CD8-positive, alpha-beta T cell (primary cell): ENCODE measurements at regions of chr3 and their contacts with region 1.

Region 1: DNA sequence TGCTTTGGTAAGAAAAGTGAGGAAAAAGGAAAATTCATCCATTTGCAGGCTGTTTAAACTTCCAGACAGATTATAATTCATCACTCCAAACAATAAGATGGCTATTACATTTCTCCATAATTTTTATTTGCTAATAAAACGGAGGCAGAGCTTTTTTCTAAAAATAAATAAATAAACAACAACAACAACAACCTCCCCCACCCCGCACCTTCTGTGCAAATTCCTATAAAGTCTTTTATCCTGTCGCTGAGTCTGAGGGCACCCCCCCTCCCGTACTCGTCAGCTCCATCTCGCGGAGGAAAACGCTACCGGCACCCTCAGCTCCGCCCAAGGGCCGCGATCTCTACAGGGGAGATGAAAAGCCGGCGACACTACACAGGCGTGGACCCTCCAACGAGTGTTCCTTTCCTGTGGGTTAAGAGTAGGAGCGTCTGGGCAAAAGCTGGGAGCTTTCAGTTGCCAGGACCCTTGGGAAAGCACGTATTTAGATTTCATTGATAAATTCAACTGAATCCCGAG is 1.0 kb upstream of the ATP1B3 start:
- DNase-seq: peak; percentile 67 to 92 (median 84)
- ATAC-seq: peak; percentile 67
- H3K4me3 ChIP-seq: peak overlapping the region; percentile 71 to 88
- H3K4me3 Mint-ChIP-seq: peak overlapping the region; percentile 88
- H3K27ac ChIP-seq: peak overlapping the region; percentile 76 to 99
- H3K27ac Mint-ChIP-seq: peak overlapping the region; percentile 90
- H3K4me1 ChIP-seq: peaks cover 17% of the 10 kb centered on the region
- H3K4me1 Mint-ChIP-seq: peaks cover 29% of the 10 kb centered on the region
- H3K27me3 ChIP-seq: no peaks in the 10 kb centered on the region
- H3K27me3 Mint-ChIP-seq: no peaks in the 10 kb centered on the region
- CTCF ChIP-seq: peak; percentile 82

Region 2: DNA sequence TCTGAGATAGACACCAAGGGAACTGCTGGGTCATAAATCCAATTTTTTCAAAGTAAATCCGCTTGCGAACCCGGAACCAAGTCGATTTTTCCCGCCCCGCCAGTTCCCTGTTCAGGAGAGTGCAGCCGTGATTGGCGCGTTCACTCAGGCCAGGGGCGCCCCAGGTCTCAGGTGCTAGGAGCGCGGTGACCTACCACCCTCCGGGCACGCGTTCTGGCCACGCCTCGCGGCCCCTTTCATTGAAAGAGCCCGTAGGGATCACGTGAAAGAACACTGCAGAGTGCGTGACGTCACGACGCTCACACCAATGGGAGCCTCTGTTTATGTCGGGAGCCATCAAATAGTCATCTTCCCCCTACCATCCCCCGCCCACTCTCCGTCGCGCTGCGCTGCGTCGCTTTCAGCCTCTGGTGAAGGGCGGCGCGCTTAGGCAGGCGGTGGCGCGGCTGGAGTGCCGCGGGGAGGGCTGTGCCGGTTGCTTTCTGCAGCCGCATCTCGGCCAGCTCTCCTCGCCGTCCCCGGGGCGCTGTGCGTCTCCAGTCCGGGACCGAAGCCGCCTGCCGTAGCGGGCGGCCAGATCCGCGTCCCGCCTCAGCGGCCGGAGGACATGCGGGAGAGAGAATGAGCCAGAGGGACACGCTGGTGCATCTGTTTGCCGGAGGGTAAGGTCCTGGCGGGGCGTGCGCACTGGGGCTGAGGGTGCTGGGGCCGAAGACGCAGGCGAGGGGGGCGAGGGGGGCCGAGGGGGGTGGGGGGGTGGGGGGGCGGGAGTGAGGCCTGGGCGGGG is 933.8 kb before region 1 on chr3 and contains the start of gene SLC25A36:
- CTCF ChIA-PET with region 1: no interaction called
- POLR2A ChIA-PET with region 1: no interaction called
- intact Hi-C with region 1: loop called in 1 of 2 experiments (anchors 5 kb)
- DNase-seq: peak; percentile 90 to 100 (median 96)
- ATAC-seq: peak; percentile 96
- H3K4me3 ChIP-seq: peak within 1 kb of the TSS; percentile 71 to 78
- H3K4me3 Mint-ChIP-seq: peak within 1 kb of the TSS; percentile 90
- H3K27ac ChIP-seq: peak within 1 kb of the TSS; percentile 85 to 88
- H3K27ac Mint-ChIP-seq: peak within 1 kb of the TSS; percentile 99
- H3K4me1 ChIP-seq: peaks cover 14% of the 10 kb centered on the region
- H3K4me1 Mint-ChIP-seq: peaks cover 36% of the 10 kb centered on the region
- H3K27me3 ChIP-seq: no peaks in the 10 kb centered on the region
- H3K27me3 Mint-ChIP-seq: no peaks in the 10 kb centered on the region
- CTCF ChIP-seq: no peak
- total RNA-seq, gene SLC25A36: 156 to 165 TPM

Region 3: DNA sequence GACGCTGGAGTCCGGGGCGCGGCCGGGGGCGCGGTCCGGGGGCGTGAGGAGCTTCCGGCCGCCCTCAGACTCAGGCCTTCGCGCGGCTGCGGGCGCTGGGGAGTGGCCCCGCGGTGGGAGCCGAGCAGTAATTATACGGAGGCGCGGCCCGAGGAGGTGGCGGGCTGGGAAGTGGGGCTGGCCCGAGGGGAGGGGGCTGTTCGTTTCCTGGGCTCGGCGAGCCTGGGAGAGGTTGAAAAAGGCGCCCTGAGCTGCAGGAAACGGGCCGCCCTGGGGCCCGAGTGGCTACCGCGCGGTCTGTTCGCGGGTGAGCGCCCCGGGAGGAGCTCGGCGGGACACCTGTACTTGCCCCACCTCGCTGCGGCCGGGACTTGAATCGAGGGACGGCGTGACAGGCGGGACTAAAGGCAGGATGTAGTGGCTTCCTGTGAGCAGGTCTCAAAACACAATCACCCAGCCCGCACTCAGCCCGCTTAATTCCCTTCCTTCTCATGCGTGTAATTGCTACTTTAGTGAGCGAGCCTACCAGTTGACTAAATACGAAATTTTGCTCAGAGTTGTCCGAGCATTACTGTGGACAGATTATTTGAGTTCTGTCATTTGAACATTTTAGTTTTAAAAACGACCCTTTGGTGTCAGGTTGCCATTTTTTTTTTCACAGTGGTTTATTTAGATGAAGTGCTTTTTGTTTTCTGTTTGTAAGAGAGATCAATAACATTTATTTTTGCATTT is 387.7 kb before region 1 on chr3:
- CTCF ChIA-PET with region 1: no interaction called
- POLR2A ChIA-PET with region 1: interaction called, 5 read pairs
- intact Hi-C with region 1: loop called (anchors 5 kb)
- DNase-seq: peak; percentile 67 to 94 (median 87)
- ATAC-seq: peak; percentile 60
- H3K4me3 ChIP-seq: peak overlapping the region; percentile 59 to 68
- H3K4me3 Mint-ChIP-seq: peak overlapping the region; percentile 93
- H3K27ac ChIP-seq: peak overlapping the region; percentile 73 to 85
- H3K27ac Mint-ChIP-seq: peak overlapping the region; percentile 96
- H3K4me1 ChIP-seq: peaks cover 65% of the 10 kb centered on the region
- H3K4me1 Mint-ChIP-seq: peaks cover 76% of the 10 kb centered on the region
- H3K27me3 ChIP-seq: no peaks in the 10 kb centered on the region
- H3K27me3 Mint-ChIP-seq: no peaks in the 10 kb centered on the region
- CTCF ChIP-seq: no peak

Region 4: DNA sequence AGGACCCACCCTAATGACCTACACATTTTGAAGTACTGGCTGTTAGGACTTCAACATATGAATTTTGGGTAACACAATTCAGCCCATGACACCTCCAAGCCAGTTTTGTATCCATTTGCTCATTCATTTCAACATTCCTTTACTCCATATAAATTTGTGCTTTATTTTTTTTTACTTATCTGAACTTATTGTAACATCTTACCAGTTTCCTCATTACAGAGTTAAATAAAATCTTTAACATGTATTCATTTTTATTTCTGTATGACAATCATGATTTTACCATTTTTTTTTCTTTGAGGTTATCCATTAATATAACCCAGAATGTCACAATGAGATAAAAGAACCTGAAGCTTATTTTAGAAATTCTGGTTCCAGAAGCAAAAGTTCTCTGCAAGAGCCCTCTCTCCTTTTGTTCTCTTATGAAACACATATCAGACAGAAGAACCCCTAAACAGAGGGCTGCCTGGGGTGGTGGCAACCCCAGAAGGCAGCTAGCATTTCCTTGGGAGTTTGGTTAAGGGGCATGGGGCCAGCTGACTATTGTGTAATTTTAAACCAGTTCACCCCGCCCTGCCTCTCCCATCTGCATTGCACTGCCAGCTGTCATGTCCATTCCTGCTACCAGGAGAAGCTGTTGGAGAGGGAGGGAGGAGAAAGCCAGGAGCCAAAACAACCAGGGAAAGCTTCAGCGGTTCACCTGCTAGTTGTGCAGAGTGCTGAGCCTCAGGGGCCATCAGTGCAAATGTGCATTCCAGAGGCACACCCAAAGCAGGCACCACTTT is 46.8 kb before region 1 on chr3:
- CTCF ChIA-PET with region 1: no interaction called
- POLR2A ChIA-PET with region 1: no interaction called
- intact Hi-C with region 1: no loop called
- DNase-seq: no peak
- ATAC-seq: no peak
- H3K4me3 ChIP-seq: no peak overlapping the region
- H3K4me3 Mint-ChIP-seq: no peak overlapping the region
- H3K27ac ChIP-seq: no peak overlapping the region
- H3K27ac Mint-ChIP-seq: no peak overlapping the region
- H3K4me1 ChIP-seq: no peaks in the 10 kb centered on the region
- H3K4me1 Mint-ChIP-seq: no peaks in the 10 kb centered on the region
- H3K27me3 ChIP-seq: no peaks in the 10 kb centered on the region
- H3K27me3 Mint-ChIP-seq: no peaks in the 10 kb centered on the region
- CTCF ChIP-seq: no peak

Region 5: GRCh38 chr3:141845407-141846049 is 29.9 kb before region 1 on chr3:
- CTCF ChIA-PET with region 1: interaction called, 10 read pairs
- POLR2A ChIA-PET with region 1: interaction called, 3 read pairs
- intact Hi-C with region 1: no loop called
- DNase-seq: peak in 8 of 9 experiments; percentile 12 to 68 (median 50)
- ATAC-seq: peak; percentile 81
- H3K4me3 ChIP-seq: no peak overlapping the region
- H3K4me3 Mint-ChIP-seq: no peak overlapping the region
- H3K27ac ChIP-seq: no peak overlapping the region
- H3K27ac Mint-ChIP-seq: peak overlapping the region; percentile 22
- H3K4me1 ChIP-seq: peaks cover 6% of the 10 kb centered on the region
- H3K4me1 Mint-ChIP-seq: peaks cover 7% of the 10 kb centered on the region
- H3K27me3 ChIP-seq: peaks cover 0 to 3% of the 10 kb centered on the region in 2 experiments
- H3K27me3 Mint-ChIP-seq: peaks cover 3% of the 10 kb centered on the region
- CTCF ChIP-seq: no peak

Region 6: GRCh38 chr3:141972399-141972798 is 97.0 kb after region 1 on chr3:
- CTCF ChIA-PET with region 1: no interaction called
- POLR2A ChIA-PET with region 1: no interaction called
- intact Hi-C with region 1: no loop called
- DNase-seq: no peak
- ATAC-seq: no peak
- H3K4me3 ChIP-seq: no peak overlapping the region
- H3K4me3 Mint-ChIP-seq: no peak overlapping the region
- H3K27ac ChIP-seq: no peak overlapping the region
- H3K27ac Mint-ChIP-seq: no peak overlapping the region
- H3K4me1 ChIP-seq: no peaks in the 10 kb centered on the region
- H3K4me1 Mint-ChIP-seq: no peaks in the 10 kb centered on the region
- H3K27me3 ChIP-seq: no peaks in the 10 kb centered on the region
- H3K27me3 Mint-ChIP-seq: no peaks in the 10 kb centered on the region
- CTCF ChIP-seq: no peak

Region 7: DNA sequence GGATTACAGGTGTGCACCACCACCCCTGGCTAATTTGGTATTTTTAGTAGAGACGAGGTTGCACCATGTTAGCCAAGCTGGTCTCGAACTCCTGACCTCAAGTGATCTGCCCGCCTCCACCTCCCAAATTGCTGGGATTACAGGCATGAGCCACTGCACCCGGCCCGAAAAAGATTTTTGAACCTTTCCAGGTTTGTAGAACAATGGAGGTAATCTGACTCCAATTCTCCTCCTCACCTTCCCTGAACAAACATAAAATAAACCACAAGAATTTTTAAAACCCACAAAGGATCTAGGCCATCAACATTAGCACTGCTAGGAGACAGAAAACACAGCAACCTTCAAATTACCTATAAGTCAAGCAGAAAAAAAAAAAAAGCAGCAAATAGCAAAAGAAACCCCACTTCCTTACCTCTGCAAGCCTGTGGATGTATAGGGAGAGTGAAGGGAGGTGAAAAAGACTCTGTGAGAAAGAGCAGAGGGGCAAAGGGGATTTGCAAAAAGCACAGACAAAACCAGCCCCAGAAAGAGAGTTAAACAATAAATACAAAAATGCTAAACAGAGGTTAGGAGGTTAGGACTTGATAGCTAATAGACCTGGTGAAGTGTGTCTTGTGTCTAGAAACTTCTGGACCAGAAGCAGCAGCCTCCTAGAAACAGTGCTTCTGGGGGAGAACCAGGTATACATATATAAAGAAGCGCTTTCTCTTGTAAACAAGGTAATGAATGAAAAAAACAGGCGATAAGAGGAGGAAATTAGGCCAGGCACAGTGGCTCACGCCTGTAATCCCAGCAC is 241.8 kb after region 1 on chr3:
- CTCF ChIA-PET with region 1: no interaction called
- POLR2A ChIA-PET with region 1: no interaction called
- intact Hi-C with region 1: no loop called
- DNase-seq: no peak
- ATAC-seq: no peak
- H3K4me3 ChIP-seq: no peak overlapping the region
- H3K4me3 Mint-ChIP-seq: no peak overlapping the region
- H3K27ac ChIP-seq: no peak overlapping the region
- H3K27ac Mint-ChIP-seq: no peak overlapping the region
- H3K4me1 ChIP-seq: no peaks in the 10 kb centered on the region
- H3K4me1 Mint-ChIP-seq: peaks cover 11% of the 10 kb centered on the region
- H3K27me3 ChIP-seq: no peaks in the 10 kb centered on the region
- H3K27me3 Mint-ChIP-seq: no peaks in the 10 kb centered on the region
- CTCF ChIP-seq: no peak

Region 8: GRCh38 chr3:142148792-142149672 is 273.6 kb after region 1 on chr3 and contains the start of gene TFDP2:
- CTCF ChIA-PET with region 1: no interaction called
- POLR2A ChIA-PET with region 1: no interaction called
- intact Hi-C with region 1: loop called (anchors 5 to 10 kb)
- DNase-seq: peak; percentile 68 to 92 (median 85)
- ATAC-seq: peak; percentile 98
- H3K4me3 ChIP-seq: peak within 1 kb of the TSS; percentile 69 to 74
- H3K4me3 Mint-ChIP-seq: peak within 1 kb of the TSS; percentile 89
- H3K27ac ChIP-seq: peak within 1 kb of the TSS; percentile 67 to 73
- H3K27ac Mint-ChIP-seq: peak within 1 kb of the TSS; percentile 85
- H3K4me1 ChIP-seq: peaks cover 17% of the 10 kb centered on the region
- H3K4me1 Mint-ChIP-seq: peaks cover 32% of the 10 kb centered on the region
- H3K27me3 ChIP-seq: no peaks in the 10 kb centered on the region
- H3K27me3 Mint-ChIP-seq: no peaks in the 10 kb centered on the region
- CTCF ChIP-seq: no peak
- total RNA-seq, gene TFDP2: 37.0 to 43.0 TPM

Region 9: GRCh38 chr3:143001369-143002082 is 1126.1 kb after region 1 on chr3 and contains the start of gene U2SURP:
- CTCF ChIA-PET with region 1: no interaction called
- POLR2A ChIA-PET with region 1: interaction called, 3 read pairs
- intact Hi-C with region 1: loop called in 1 of 2 experiments (anchors 2 kb)
- DNase-seq: peak; percentile 82 to 97 (median 90)
- ATAC-seq: peak; percentile 93
- H3K4me3 ChIP-seq: peak within 1 kb of the TSS; percentile 81 to 92
- H3K4me3 Mint-ChIP-seq: peak within 1 kb of the TSS; percentile 99
- H3K27ac ChIP-seq: peak within 1 kb of the TSS; percentile 91 to 92
- H3K27ac Mint-ChIP-seq: peak within 1 kb of the TSS; percentile 99
- H3K4me1 ChIP-seq: peaks cover 34% of the 10 kb centered on the region
- H3K4me1 Mint-ChIP-seq: peaks cover 42% of the 10 kb centered on the region
- H3K27me3 ChIP-seq: no peaks in the 10 kb centered on the region
- H3K27me3 Mint-ChIP-seq: no peaks in the 10 kb centered on the region
- CTCF ChIP-seq: no peak
- total RNA-seq, gene U2SURP: 186 TPM